ENCODE measurements at regions of chr5 and their contacts with region 1.

Region 1: DNA sequence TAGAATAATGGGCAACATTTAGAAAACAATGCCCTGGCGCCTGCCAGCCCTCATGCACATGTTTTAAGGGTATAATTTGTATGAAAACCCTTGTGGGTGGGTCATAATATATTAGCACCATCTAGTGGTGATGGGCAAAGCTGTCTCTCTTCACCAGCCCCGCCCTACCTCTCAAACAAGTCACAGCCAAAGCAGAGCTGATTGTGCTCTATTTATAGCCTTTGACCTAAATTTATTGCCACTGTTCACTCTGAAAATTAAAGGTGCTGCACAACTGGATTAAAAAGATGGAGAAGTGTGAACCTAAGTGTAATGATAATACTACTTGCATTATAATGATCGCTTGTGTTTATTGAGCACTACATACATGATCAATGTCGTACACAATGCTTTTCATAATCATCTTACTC is 131.9 kb upstream of the ANKH start:
- DNase-seq: peak; percentile 82
- H3K4me3 ChIP-seq: no peak overlapping the region
- H3K27ac ChIP-seq: no peak overlapping the region
- H3K4me1 ChIP-seq: peaks cover 8% of the 10 kb centered on the region
- H3K27me3 ChIP-seq: peaks cover 21 to 39% of the 10 kb centered on the region in 2 experiments
- CTCF ChIP-seq: peak; percentile 70 to 81
- POLR2A ChIP-seq: no peak

Region 2: GRCh38 chr5:14685757-14686156 is 317.8 kb before region 1 on chr5:
- CTCF ChIA-PET with region 1: interaction called, 94 read pairs
- POLR2A ChIA-PET with region 1: no interaction called
- dilution Hi-C with region 1: no loop called
- intact Hi-C with region 1: loop called (anchors 1 kb)
- DNase-seq: peak; percentile 59
- H3K4me3 ChIP-seq: no peak overlapping the region
- H3K27ac ChIP-seq: no peak overlapping the region
- H3K4me1 ChIP-seq: no peaks in the 10 kb centered on the region
- H3K27me3 ChIP-seq: no peaks in the 10 kb centered on the region
- CTCF ChIP-seq: peak; percentile 53 to 56
- POLR2A ChIP-seq: no peak

Region 3: DNA sequence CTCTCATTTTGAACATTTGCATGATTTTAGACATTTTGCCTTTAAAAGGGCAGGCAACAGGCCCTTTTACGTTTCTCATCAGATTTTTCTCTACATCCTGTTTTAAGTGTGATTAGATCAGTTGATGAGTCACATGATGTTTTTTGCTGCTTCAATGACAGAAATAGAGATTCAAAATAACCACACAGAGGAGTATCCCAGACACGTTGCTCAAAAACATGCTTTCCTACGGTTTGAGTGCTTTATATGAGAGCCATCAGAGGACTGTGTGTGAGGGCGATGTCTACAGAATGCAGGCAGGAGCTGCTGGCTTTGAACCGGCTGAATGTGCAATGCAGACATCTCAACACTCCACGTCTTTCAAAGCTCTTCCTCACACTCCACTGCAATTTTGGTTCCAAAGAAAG is 296.9 kb before region 1 on chr5:
- CTCF ChIA-PET with region 1: interaction called, 10 read pairs
- POLR2A ChIA-PET with region 1: no interaction called
- dilution Hi-C with region 1: no loop called
- intact Hi-C with region 1: no loop called
- DNase-seq: peak; percentile 66
- H3K4me3 ChIP-seq: no peak overlapping the region
- H3K27ac ChIP-seq: no peak overlapping the region
- H3K4me1 ChIP-seq: peaks cover 13% of the 10 kb centered on the region
- H3K27me3 ChIP-seq: no peaks in the 10 kb centered on the region
- CTCF ChIP-seq: no peak
- POLR2A ChIP-seq: no peak

Region 4: DNA sequence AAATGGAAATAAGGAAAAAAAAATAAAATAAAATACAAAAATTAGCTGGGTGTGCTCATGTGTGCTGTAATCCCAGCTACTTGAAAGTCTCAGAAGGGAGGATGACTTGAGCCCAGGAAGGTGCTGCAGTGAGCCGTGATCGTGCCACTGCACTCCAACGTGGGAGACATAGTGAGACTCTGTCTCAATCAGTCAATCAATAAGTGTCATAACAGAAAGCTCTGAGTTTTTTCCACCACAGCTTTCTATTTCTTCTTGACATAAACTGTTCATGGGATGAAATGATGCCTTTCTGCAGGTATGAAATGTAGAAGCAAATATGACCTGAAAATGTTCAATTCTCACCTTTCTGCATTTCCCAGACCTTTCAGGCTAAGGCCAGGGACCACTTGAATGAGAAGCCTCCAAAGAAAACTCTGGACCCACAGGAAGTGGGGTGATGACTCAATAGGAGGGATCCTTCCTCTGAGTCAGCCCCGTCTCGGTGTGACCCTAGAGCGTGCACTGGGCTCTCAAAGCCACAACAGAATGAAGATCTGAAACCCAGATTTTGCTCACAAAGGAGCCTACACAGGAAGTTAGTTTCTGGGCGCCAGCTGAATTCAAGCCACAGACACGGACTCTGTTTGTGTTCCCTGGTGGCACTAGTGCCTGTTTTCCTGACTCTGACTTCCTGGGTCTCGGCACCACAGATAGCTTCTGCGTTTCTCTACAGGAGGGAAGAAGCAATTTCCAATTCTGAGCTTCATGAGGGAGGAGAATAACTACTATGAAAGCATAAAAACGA is 194.0 kb before region 1 on chr5:
- CTCF ChIA-PET with region 1: no interaction called
- POLR2A ChIA-PET with region 1: no interaction called
- dilution Hi-C with region 1: no loop called
- intact Hi-C with region 1: no loop called
- DNase-seq: peak; percentile 75
- H3K4me3 ChIP-seq: no peak overlapping the region
- H3K27ac ChIP-seq: peak overlapping the region; percentile 50
- H3K4me1 ChIP-seq: peaks cover 20% of the 10 kb centered on the region
- H3K27me3 ChIP-seq: no peaks in the 10 kb centered on the region
- CTCF ChIP-seq: no peak
- POLR2A ChIP-seq: no peak

Region 5: GRCh38 chr5:14871210-14872069 is 132.1 kb before region 1 on chr5 and contains the start of gene ANKH:
- CTCF ChIA-PET with region 1: interaction called, 13 read pairs
- POLR2A ChIA-PET with region 1: no interaction called
- dilution Hi-C with region 1: no loop called
- intact Hi-C with region 1: loop called (anchors 2 kb)
- DNase-seq: peak; percentile 62
- H3K4me3 ChIP-seq: peak within 1 kb of the TSS; percentile 75 to 91 (median 86)
- H3K27ac ChIP-seq: peak within 1 kb of the TSS; percentile 59
- H3K4me1 ChIP-seq: peaks cover 20% of the 10 kb centered on the region
- H3K27me3 ChIP-seq: peaks cover 4% of the 10 kb centered on the region in 2 experiments
- CTCF ChIP-seq: peak in 1 of 2 donors; percentile 28
- POLR2A ChIP-seq: no peak
- total RNA-seq, gene ANKH: 31.4 and 39.5 TPM in 2 replicates

Region 6: DNA sequence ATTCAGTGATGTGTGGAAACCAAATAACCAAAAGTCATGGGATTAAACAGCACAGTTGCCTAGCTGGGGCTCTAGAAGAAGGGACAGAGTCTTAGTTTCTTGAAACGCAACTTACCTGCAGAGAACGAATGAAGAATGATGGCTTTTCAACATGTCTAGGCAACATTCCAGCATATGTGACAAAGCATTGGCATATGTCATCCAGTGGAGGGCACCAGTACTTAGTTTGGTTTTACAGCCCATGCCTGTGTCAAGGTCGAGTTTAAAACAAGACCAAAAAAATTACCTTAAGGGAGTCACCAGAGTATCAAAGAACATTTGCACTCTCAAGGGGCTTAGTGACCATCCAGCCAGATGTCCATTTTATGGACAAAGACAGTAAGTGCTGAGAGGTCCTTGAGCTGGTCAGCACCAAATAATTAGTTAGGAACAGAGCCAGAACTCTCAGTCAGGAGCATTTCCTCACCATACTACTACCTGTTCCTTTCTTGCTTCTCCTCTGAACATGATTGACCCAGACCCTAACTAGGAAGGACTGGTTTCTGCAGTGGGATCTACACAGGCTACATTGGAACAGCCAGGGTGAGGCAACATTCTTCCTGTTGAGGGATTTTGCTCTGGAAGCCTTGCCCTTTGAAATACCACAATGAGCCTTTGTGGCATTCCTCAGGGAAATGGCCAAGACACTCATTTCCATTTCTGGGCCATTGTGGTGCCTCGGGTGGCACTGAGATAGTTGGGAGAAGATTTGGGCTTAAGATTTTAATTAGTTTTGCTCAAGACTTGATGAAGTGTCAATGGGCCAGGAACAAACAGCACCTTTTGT is 56.5 kb before region 1 on chr5:
- CTCF ChIA-PET with region 1: interaction called, 3 read pairs
- POLR2A ChIA-PET with region 1: no interaction called
- dilution Hi-C with region 1: no loop called
- intact Hi-C with region 1: loop called (anchors 2 kb)
- DNase-seq: peak; percentile 30
- H3K4me3 ChIP-seq: no peak overlapping the region
- H3K27ac ChIP-seq: no peak overlapping the region
- H3K4me1 ChIP-seq: no peaks in the 10 kb centered on the region
- H3K27me3 ChIP-seq: peaks cover 0 to 10% of the 10 kb centered on the region in 2 experiments
- CTCF ChIP-seq: peak in 1 of 2 donors; percentile 35
- POLR2A ChIP-seq: no peak

Region 7: DNA sequence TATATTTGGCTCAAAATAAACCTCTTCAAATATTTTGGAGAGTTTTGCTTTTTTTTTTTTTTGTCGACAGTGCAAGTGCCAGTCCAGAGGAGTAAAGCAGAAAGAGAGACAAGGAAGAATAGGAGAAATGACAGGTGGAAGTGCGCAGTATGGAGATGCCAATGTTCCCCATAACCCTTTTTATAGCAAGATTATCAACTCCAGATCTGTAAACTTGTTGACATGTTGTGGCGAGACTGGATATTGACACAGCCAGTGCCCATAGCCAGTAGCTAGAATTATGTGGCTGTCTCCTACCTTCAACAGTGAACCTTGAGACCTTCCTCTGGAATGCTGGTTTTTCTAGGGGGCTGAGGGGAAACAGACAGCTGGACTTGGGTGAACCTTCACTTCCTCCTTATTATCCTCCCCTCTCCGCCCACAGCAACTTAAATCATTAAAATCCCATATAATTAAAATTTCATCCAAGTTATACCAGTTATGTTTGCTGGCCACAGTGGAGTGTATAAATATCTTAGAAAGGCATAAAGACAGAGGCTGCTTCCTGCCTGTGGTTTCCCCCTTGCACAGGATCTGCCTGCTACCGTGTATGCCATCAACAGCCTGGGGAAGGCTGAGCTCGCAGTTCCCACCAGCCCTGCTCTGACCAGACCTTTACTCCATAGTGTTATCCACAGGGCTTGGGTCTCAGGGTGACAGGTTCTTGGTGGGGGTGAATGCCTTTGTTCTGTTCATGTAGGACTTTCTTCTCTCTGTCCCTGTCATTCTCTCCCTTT is 19.7 kb before region 1 on chr5:
- CTCF ChIA-PET with region 1: interaction called, 17 read pairs
- POLR2A ChIA-PET with region 1: no interaction called
- dilution Hi-C with region 1: no loop called
- intact Hi-C with region 1: no loop called
- DNase-seq: no peak
- H3K4me3 ChIP-seq: no peak overlapping the region
- H3K27ac ChIP-seq: no peak overlapping the region
- H3K4me1 ChIP-seq: no peaks in the 10 kb centered on the region
- H3K27me3 ChIP-seq: peaks cover 0 to 2% of the 10 kb centered on the region in 2 experiments
- CTCF ChIP-seq: no peak
- POLR2A ChIP-seq: no peak

Region 8: DNA sequence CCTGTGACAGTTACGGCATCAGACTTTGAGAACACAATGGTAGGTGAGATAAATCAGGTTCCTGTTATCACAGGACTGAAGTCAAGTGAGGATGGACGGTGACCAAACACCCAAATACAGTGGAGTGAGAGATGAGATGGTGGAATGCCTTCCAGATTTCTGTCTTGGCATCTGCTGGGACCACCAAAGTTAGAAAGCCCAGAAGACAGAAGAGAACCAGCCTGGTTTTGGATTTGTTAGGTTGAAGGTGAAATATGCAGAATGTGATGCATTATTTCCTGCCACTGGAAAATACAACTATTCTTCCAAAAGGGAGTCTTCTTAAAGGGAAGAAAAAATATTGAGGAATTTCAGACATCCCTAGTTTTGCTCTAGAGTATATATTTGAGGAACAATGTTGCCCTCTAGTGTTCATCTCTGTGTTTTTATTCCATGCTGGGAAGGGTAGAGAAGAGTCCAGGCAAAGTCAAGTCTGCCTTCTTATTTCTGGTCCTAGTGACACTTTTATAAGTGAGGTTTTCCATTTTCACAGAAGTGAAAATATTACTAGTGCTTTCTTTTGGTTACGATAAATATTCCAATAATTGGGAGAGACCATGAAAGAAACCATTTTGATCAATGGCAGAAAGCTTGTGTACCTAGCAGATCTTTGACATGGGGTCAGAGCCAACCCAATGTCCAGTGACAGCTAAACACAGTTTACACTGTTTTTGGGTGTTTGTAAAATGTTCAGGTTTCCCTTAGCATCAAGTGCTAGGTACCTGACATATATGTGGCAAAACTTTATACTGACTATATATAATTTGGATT is 10.3 kb after region 1 on chr5:
- CTCF ChIA-PET with region 1: interaction called, 24 read pairs
- POLR2A ChIA-PET with region 1: interaction called, 4 read pairs
- dilution Hi-C with region 1: no loop called
- intact Hi-C with region 1: no loop called
- DNase-seq: peak; percentile 74
- H3K4me3 ChIP-seq: no peak overlapping the region
- H3K27ac ChIP-seq: no peak overlapping the region
- H3K4me1 ChIP-seq: peaks cover 11% of the 10 kb centered on the region
- H3K27me3 ChIP-seq: peaks cover 0 to 5% of the 10 kb centered on the region in 2 experiments
- CTCF ChIP-seq: peak; percentile 38 to 39
- POLR2A ChIP-seq: no peak

Measured in endothelial cell of umbilical vein (primary cell).